Activated CD4-positive, alpha-beta memory T cell treated with anti-CD3 and anti-CD28 coated beads, Interleukin-2, amount 10 ng/mL, durations not matched to agents 7 days and 5 days (primary cell): ENCODE measurements at regions of chr15 and their contacts with region 1.

Region 1: DNA sequence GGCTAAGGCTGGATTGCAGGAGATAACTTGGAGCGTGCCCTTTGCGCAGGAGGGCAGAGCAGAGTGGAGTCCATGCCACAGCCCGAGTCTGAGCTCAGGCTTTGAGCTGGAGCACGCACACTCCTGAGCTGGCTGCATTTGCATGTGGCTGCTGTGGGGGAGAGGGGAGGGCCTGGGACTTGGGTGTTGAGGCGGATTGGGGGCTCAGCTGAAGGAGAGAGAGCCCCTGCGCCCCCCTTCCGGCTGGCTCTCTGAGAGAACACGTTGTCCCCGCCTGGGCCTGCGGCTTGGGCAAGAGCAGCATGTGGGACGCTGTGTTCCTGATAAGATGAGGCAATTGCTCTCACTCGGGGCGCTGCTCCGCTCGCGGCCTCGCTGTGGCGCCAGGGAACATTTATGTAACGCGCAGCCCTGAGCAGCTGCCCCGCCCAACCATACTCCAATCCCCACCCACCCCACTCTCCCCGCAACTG is 39.1 kb downstream of the KLF13 start:
- DNase-seq: peak; percentile 86
- H3K4me3 Mint-ChIP-seq: peak overlapping the region; percentile 64
- H3K27ac Mint-ChIP-seq: peak overlapping the region; percentile 99
- H3K4me1 Mint-ChIP-seq: peaks cover 99% of the 10 kb centered on the region
- H3K27me3 Mint-ChIP-seq: no peaks in the 10 kb centered on the region

Region 2: DNA sequence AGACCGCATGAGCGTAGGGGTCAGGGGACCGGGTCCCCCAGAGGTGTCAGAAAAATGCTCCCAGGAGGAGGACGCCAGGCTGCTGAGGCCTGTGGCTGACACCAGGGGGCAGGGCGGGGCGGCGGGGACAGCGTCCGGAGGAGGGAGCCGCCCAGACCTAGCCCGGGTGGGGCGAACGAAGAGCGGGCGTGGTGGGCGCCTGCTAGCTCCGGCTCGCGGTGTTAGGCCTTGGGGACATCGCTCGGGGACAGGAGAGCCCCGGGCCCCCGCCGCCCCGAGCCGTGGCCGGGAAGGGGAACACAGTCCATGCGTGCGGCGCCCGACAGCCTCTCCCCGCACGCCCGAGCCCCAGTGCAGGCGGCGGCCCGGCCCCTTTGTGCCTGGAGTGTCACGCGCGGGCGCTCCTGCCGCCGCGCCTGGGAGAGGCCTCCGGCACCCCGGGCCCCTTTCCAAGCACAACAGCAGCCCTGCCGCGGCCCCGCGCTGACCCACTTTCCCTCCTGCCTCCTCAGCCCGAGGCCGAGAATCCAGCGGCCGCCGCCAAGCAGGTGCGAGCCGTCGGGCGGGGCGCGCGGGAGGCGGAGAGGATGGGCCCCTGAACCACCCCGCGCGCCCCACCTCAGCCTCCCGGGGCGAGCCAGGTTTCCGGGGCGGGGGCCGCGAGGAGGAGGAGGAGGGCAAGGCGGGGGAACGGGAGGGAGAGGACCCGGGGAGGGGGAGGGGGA is 150.0 kb before region 1 on chr15:
- CTCF ChIA-PET with region 1: interaction called, 9 read pairs
- POLR2A ChIA-PET with region 1: interaction called, 13 read pairs
- DNase-seq: peak; percentile 85
- H3K4me3 Mint-ChIP-seq: peak overlapping the region; percentile 78
- H3K27ac Mint-ChIP-seq: peak overlapping the region; percentile 78
- H3K4me1 Mint-ChIP-seq: peaks cover 47% of the 10 kb centered on the region
- H3K27me3 Mint-ChIP-seq: no peaks in the 10 kb centered on the region

Region 3: GRCh38 chr15:31326156-31326732 is 39.4 kb before region 1 on chr15:
- CTCF ChIA-PET with region 1: interaction called, 7 read pairs
- POLR2A ChIA-PET with region 1: interaction called, 170 read pairs
- DNase-seq: peak; percentile 100
- H3K4me3 Mint-ChIP-seq: peak overlapping the region; percentile 88
- H3K27ac Mint-ChIP-seq: peak overlapping the region; percentile 86
- H3K4me1 Mint-ChIP-seq: peaks cover 43% of the 10 kb centered on the region
- H3K27me3 Mint-ChIP-seq: no peaks in the 10 kb centered on the region

Region 4: GRCh38 chr15:31352911-31353811 is 12.5 kb before region 1 on chr15:
- CTCF ChIA-PET with region 1: interaction called, 11 read pairs
- POLR2A ChIA-PET with region 1: interaction called, 374 read pairs
- DNase-seq: no peak
- H3K4me3 Mint-ChIP-seq: peak overlapping the region; percentile 66
- H3K27ac Mint-ChIP-seq: peak overlapping the region; percentile 93
- H3K4me1 Mint-ChIP-seq: peaks cover 98% of the 10 kb centered on the region
- H3K27me3 Mint-ChIP-seq: no peaks in the 10 kb centered on the region

Region 5: GRCh38 chr15:31391687-31392671 is 26.3 kb after region 1 on chr15:
- CTCF ChIA-PET with region 1: interaction called, 18 read pairs
- POLR2A ChIA-PET with region 1: interaction called, 20 read pairs
- DNase-seq: peak; percentile 87
- H3K4me3 Mint-ChIP-seq: peak overlapping the region; percentile 88
- H3K27ac Mint-ChIP-seq: peak overlapping the region; percentile 80
- H3K4me1 Mint-ChIP-seq: peaks cover 49% of the 10 kb centered on the region
- H3K27me3 Mint-ChIP-seq: no peaks in the 10 kb centered on the region

Region 6: GRCh38 chr15:31483053-31483985 is 117.6 kb after region 1 on chr15:
- CTCF ChIA-PET with region 1: interaction called, 128 read pairs
- POLR2A ChIA-PET with region 1: interaction called, 29 read pairs
- DNase-seq: peak; percentile 64
- H3K4me3 Mint-ChIP-seq: peak overlapping the region; percentile 86
- H3K27ac Mint-ChIP-seq: peak overlapping the region; percentile 86
- H3K4me1 Mint-ChIP-seq: peaks cover 63% of the 10 kb centered on the region
- H3K27me3 Mint-ChIP-seq: peaks cover 7% of the 10 kb centered on the region